Activated B cell treated with CpG ODN at 0.5 μM for 24 hours (primary cell): ENCODE measurements at regions of chr12 and their contacts with region 1.

Region 1: GRCh38 chr12:8949342-8950220 is at the start of gene M6PR:
- DNase-seq: peak; percentile 89
- ATAC-seq: peak; percentile 82
- H3K4me3 Mint-ChIP-seq: peak within 1 kb of the TSS; percentile 99
- H3K27ac Mint-ChIP-seq: peak within 1 kb of the TSS; percentile 95
- H3K4me1 Mint-ChIP-seq: peaks cover 50% of the 10 kb centered on the region
- H3K27me3 Mint-ChIP-seq: no peaks in the 10 kb centered on the region
- CTCF ChIP-seq: no peak
- total RNA-seq, gene M6PR: 202 and 229 TPM in 2 replicates

Region 2: DNA sequence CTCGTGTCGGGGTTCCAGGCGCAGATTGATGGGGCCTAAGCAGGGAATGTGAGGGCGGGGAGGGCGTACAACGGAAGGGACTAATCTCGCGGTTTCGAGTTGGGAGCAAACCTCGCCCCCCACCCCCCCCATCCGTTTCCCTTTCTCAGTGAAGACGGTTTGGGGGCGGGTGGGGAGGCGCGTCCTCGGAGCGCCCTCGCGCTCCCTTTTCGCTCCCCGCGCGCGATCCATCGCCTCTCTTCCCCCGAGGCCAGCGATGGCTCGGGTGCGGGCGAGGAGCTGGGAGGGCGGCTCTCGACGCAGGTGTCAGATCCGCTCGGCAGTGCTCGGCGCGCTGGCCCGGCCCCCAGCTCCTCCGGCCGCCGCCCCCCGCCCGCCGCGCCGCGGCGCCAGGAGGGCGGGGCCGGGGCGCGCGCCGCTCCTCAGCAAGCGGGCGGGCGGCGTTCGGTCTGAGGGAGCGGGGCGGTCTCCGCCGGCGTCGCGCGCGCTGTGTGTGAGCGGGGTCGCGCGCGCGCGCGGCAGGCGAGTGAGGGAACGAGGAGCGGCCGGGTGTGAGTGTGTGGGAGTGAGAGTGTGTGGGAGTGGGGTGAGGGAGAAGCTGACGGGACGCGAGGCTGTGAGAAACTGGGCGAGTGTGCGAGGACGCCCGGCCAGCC is 252.0 kb before region 1 on chr12 and contains the start of gene RIMKLB:
- CTCF ChIA-PET with region 1: no interaction called
- POLR2A ChIA-PET with region 1: interaction called, 7 read pairs
- intact Hi-C with region 1: loop called (anchors 1 kb)
- DNase-seq: peak; percentile 78
- ATAC-seq: peak; percentile 85
- H3K4me3 Mint-ChIP-seq: peak within 1 kb of the TSS; percentile 96
- H3K27ac Mint-ChIP-seq: peak within 1 kb of the TSS; percentile 93
- H3K4me1 Mint-ChIP-seq: peaks cover 46% of the 10 kb centered on the region
- H3K27me3 Mint-ChIP-seq: no peaks in the 10 kb centered on the region
- CTCF ChIP-seq: no peak
- total RNA-seq, gene RIMKLB: 31.0 and 31.9 TPM in 2 replicates

Region 3: DNA sequence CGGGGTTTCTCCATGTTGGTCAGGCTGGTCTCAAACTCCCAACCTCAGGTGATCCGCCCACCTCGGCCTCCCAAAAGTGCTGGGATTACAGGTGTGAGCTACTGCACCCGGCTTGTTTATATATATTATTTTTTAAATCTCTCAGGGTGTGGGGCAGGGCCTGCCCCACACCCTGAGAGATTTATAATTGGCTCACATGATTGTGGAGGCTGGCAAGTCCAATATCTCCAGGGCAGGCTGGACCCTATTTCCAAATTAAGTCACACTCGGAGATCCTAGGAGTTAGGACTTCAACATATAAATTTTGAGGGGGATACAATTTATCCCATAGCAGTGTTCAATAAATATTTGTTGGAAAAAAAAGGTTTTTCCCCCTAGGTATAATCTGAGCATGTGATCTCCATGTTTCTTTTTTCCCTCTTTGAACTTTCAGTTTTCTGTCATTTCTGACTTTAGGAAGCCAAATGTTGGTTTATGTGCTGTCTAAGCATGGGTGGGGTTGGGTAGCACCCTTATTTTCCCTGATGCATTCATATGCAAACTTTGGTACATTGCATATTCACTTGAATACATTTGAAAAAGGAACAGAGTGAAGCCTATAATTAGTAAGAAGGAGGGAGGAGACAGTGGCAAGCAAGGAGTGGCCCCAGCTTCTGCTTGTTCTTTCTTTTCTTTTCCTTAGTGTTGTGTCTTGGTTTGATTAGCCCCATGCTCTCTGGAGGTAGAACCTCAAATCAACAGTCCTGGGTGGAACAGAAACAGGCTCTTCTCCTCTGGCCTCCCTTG is 135.8 kb before region 1 on chr12:
- CTCF ChIA-PET with region 1: no interaction called
- POLR2A ChIA-PET with region 1: no interaction called
- intact Hi-C with region 1: no loop called
- DNase-seq: no peak
- ATAC-seq: no peak
- H3K4me3 Mint-ChIP-seq: no peak overlapping the region
- H3K27ac Mint-ChIP-seq: no peak overlapping the region
- H3K4me1 Mint-ChIP-seq: peaks cover 5% of the 10 kb centered on the region
- H3K27me3 Mint-ChIP-seq: no peaks in the 10 kb centered on the region
- CTCF ChIP-seq: no peak

Region 4: DNA sequence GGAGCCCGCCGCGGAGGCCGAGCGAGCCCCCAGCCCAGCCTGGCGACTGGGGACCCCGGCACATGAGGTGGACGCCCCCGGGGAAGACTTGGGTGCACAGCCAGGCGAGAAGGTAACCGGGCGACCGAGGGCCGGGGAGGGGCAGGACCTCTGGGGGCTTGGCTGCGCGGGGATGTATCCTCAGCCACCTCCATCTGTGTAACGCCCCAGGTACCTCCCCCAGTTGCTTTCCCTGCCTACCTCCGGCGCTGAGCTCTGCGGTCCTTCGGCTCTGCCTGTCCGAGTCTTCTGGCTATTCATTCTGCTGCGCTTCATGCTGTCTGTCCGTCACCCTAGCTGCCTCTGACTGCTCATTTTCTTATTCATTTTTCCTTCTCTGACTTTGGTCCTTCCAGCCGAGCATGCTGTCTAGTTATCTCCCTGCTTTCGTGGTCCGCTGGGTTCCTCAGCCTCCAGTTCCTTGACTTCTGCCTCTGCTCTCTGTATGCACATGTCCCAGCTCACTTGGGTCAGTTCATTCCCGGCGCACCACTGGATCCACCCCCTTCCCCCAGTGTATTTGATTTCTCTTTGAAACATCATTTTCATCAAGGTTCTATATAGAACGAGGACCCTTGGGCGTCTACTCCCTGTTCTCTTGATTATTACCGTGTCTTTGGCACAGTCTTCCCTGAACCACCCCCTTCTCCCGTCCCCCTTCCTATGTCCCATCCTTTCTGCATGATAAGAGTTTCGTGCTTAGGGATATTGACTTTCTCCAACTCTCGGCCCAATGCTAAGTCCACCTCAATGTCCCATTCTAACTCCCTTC is 34.7 kb before region 1 on chr12:
- CTCF ChIA-PET with region 1: interaction called, 5 read pairs
- POLR2A ChIA-PET with region 1: interaction called, 8 read pairs
- intact Hi-C with region 1: loop called (anchors 1 kb)
- DNase-seq: peak; percentile 65
- ATAC-seq: peak; percentile 83
- H3K4me3 Mint-ChIP-seq: no peak overlapping the region
- H3K27ac Mint-ChIP-seq: no peak overlapping the region
- H3K4me1 Mint-ChIP-seq: peaks cover 25% of the 10 kb centered on the region
- H3K27me3 Mint-ChIP-seq: no peaks in the 10 kb centered on the region
- CTCF ChIP-seq: no peak

Region 5: GRCh38 chr12:9039397-9039977 is 89.9 kb after region 1 on chr12:
- CTCF ChIA-PET with region 1: interaction called, 20 read pairs
- POLR2A ChIA-PET with region 1: interaction called, 6 read pairs
- intact Hi-C with region 1: loop called (anchors 1 kb)
- DNase-seq: no peak
- ATAC-seq: peak; percentile 69
- H3K4me3 Mint-ChIP-seq: no peak overlapping the region
- H3K27ac Mint-ChIP-seq: no peak overlapping the region
- H3K4me1 Mint-ChIP-seq: no peaks in the 10 kb centered on the region
- H3K27me3 Mint-ChIP-seq: peaks cover 2% of the 10 kb centered on the region
- CTCF ChIP-seq: peak; percentile 63